IMR-90 (cell line): ENCODE measurements at regions of chr17 and their contacts with region 1.

Region 1: GRCh38 chr17:46266656-46267544 is 28.0 kb upstream of the LRRC37A start:
- DNase-seq: peak; percentile 82
- ATAC-seq: peak; percentile 92
- H3K4me3 ChIP-seq: peak overlapping the region; percentile 50
- H3K27ac ChIP-seq: peak overlapping the region; percentile 81
- H3K4me1 ChIP-seq: peaks cover 21% of the 10 kb centered on the region
- H3K27me3 ChIP-seq: no peaks in the 10 kb centered on the region
- CTCF ChIP-seq: no peak
- POLR2A ChIP-seq: peak; percentile 45
- RAD21 ChIP-seq: no peak

Region 2: GRCh38 chr17:45584092-45585036 is 682.5 kb before region 1 on chr17:
- CTCF ChIA-PET with region 1: interaction called, 3 read pairs
- POLR2A ChIA-PET with region 1: no interaction called
- dilution Hi-C with region 1: no loop called
- in situ Hi-C with region 1: loop called (anchors 25 kb)
- intact Hi-C with region 1: no loop called
- DNase-seq: peak; percentile 36
- ATAC-seq: peak; percentile 65
- H3K4me3 ChIP-seq: peak overlapping the region; percentile 81
- H3K27ac ChIP-seq: peak overlapping the region; percentile 87
- H3K4me1 ChIP-seq: peaks cover 3% of the 10 kb centered on the region
- H3K27me3 ChIP-seq: no peaks in the 10 kb centered on the region
- CTCF ChIP-seq: no peak
- POLR2A ChIP-seq: no peak
- RAD21 ChIP-seq: no peak

Region 3: DNA sequence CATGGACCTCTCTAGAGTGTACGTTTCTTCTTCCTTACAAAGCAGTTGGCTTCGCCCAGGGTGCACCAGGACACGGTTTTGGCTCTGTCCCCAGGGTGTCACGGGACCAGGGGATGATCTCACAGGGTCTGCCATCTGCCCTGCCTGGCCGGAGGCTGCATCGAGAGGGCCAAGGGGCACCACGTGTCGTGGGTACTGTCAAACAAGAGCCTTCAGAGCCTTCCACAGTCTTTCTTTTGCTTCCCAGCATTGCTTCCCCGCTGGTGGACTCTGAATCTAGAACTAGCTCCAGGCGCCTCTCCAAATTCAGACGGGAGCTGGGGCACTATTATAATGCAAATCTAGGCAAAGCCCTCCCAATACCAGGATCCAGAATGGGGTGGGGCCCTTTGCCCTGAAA is 324.6 kb before region 1 on chr17:
- CTCF ChIA-PET with region 1: no interaction called
- POLR2A ChIA-PET with region 1: no interaction called
- dilution Hi-C with region 1: no loop called
- in situ Hi-C with region 1: no loop called
- intact Hi-C with region 1: no loop called
- DNase-seq: no peak
- ATAC-seq: no peak
- H3K4me3 ChIP-seq: no peak overlapping the region
- H3K27ac ChIP-seq: no peak overlapping the region
- H3K4me1 ChIP-seq: no peaks in the 10 kb centered on the region
- H3K27me3 ChIP-seq: peaks cover 46% of the 10 kb centered on the region
- CTCF ChIP-seq: no peak
- POLR2A ChIP-seq: no peak
- RAD21 ChIP-seq: no peak

Region 4: GRCh38 chr17:46061435-46061834 is 205.5 kb before region 1 on chr17:
- CTCF ChIA-PET with region 1: no interaction called
- POLR2A ChIA-PET with region 1: no interaction called
- dilution Hi-C with region 1: no loop called
- in situ Hi-C with region 1: no loop called
- intact Hi-C with region 1: no loop called
- DNase-seq: no peak
- ATAC-seq: no peak
- H3K4me3 ChIP-seq: no peak overlapping the region
- H3K27ac ChIP-seq: no peak overlapping the region
- H3K4me1 ChIP-seq: peaks cover 6% of the 10 kb centered on the region; the same call in 1 of the 2 replicates
- H3K27me3 ChIP-seq: no peaks in the 10 kb centered on the region
- CTCF ChIP-seq: peak; percentile 30
- POLR2A ChIP-seq: no peak
- RAD21 ChIP-seq: peak; percentile 14; the same call in 1 of the 2 replicates

Region 5: DNA sequence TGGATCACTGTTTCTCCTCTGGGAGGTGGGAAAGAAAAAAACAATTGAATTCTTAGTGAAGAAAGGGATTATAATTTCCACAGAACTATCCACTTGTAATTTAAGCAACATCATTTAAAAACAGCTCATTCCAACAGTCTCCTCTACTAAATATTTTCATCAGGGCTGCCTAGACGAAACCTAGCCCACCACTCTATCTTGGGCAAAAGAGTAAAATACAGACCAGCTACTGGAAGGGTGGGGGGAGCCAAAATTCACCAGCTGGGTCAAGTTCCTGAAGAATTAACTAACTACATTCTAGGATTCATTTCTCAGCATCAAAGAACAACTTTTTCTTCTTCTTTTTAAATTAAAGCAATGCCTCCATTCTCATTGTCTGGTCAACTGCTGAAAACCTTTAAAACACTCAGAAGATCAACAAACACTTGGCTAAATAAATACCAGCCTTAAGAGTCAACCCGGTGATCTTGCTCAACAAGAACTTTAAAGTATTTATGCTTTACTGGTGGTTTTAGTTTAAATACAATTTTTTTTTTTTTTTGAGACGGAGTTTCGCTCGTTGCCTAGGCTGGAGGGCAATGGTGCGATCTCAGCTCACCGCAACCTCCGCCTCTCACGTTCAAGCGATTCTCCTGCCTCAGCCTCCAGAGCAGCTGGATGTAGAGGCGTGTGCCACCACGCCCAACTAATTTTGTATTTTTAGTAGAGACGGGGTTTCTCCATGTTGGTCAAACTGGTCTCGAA is 98.9 kb before region 1 on chr17:
- CTCF ChIA-PET with region 1: no interaction called
- POLR2A ChIA-PET with region 1: no interaction called
- dilution Hi-C with region 1: no loop called
- in situ Hi-C with region 1: no loop called
- intact Hi-C with region 1: no loop called
- DNase-seq: peak; percentile 90
- ATAC-seq: peak; percentile 90
- H3K4me3 ChIP-seq: peak overlapping the region; percentile 29; the same call in 1 of the 2 replicates
- H3K27ac ChIP-seq: peak overlapping the region; percentile 77
- H3K4me1 ChIP-seq: peaks cover 25% of the 10 kb centered on the region
- H3K27me3 ChIP-seq: no peaks in the 10 kb centered on the region
- CTCF ChIP-seq: no peak
- POLR2A ChIP-seq: no peak
- RAD21 ChIP-seq: no peak

Region 6: DNA sequence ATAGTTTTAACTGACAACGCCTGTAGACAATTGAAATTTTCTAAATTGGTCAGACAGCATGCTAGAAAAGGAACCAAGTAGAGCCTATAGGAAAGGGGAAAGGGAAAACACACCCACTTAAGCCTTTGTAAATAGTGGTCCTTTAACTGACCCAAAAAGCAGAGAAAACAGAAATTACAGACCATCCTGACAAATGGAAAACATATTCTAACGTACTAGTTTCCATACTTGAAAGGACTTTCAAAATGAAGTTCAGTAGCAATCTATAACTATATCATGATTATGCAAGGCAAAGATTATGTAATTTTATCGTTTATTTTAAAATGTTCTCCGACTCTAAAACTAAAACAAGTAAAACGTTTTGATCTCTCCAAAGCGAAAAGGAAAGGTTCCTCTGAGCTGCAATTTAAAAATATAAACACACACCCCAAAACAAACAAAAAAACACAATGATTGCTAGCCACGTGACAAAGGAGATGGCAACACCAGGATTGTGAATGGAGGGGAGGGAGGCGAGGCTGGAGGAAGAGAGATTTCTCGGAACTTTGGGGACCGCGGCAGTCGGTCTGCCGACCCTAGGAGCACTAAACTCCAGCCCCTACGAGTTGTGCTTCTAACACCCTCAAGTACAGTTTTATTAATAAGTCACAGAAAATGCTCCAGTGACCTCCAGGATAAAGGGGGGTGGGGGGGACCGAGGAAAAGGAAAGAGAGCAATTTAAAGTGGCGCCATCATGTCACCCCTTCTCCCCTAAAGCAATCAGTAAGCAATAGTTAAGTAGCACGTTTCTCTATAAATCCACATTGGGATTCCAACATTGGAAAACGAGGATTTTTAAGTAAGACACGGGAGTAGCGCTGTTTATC is 75.3 kb before region 1 on chr17:
- CTCF ChIA-PET with region 1: no interaction called
- POLR2A ChIA-PET with region 1: no interaction called
- dilution Hi-C with region 1: no loop called
- in situ Hi-C with region 1: no loop called
- intact Hi-C with region 1: no loop called
- DNase-seq: no peak
- ATAC-seq: no peak
- H3K4me3 ChIP-seq: peak overlapping the region; percentile 62
- H3K27ac ChIP-seq: peak overlapping the region; percentile 16
- H3K4me1 ChIP-seq: peaks cover 8% of the 10 kb centered on the region
- H3K27me3 ChIP-seq: no peaks in the 10 kb centered on the region
- CTCF ChIP-seq: no peak
- POLR2A ChIP-seq: no peak
- RAD21 ChIP-seq: no peak

Region 7: GRCh38 chr17:46922804-46923635 is 656.1 kb after region 1 on chr17 and contains the start of gene GOSR2:
- CTCF ChIA-PET with region 1: no interaction called
- POLR2A ChIA-PET with region 1: no interaction called
- dilution Hi-C with region 1: no loop called
- in situ Hi-C with region 1: no loop called
- intact Hi-C with region 1: loop called (anchors 10 kb)
- DNase-seq: peak; percentile 86
- ATAC-seq: peak; percentile 98
- H3K4me3 ChIP-seq: peak within 1 kb of the TSS; percentile 84
- H3K27ac ChIP-seq: peak within 1 kb of the TSS; percentile 92
- H3K4me1 ChIP-seq: no peaks in the 10 kb centered on the region; the same call in 1 of the 2 replicates
- H3K27me3 ChIP-seq: no peaks in the 10 kb centered on the region
- CTCF ChIP-seq: no peak
- POLR2A ChIP-seq: peak; percentile 98
- RAD21 ChIP-seq: no peak
- total RNA-seq, gene GOSR2: 65.8 and 75.6 TPM in 2 replicates